ENCODE measurements at regions of chr14 and their contacts with region 1.

Region 1: GRCh38 chr14:23320774-23321571 is at the start of gene PABPN1:
- DNase-seq: peak; percentile 99 to 100 (median 99)
- H3K4me3 ChIP-seq: peak within 1 kb of the TSS; percentile 81
- H3K27ac ChIP-seq: peak within 1 kb of the TSS; percentile 74 to 98
- H3K4me1 ChIP-seq: peaks cover 10% of the 10 kb centered on the region
- H3K27me3 ChIP-seq: no peaks in the 10 kb centered on the region
- CTCF ChIP-seq: no peak
- EP300 ChIP-seq: peak; percentile 74
- POLR2A ChIP-seq: peak; percentile 70
- total RNA-seq, gene PABPN1: 37.2 to 164 (median 136) TPM

Region 2: DNA sequence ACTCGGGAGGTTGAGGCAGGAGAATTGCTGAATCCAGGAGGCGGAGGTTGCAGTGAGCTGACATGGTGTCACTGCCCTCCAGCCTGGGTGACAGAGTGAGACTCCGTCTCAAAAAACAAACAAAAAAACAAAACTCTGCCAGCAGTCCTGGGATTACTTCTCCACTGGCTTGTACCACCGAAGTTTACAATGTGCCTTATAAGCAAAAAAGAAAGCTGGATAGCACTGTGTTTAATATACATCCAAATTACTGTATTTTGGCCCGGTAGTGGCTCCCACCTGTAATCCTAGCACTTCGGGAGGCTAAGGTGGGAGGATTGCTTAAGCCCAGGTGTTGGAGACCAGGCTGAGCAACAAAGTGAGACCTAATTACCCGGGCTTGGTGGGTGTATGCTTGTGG is 51.8 kb before region 1 on chr14:
- intact Hi-C with region 1: no loop called
- DNase-seq: no peak
- H3K4me3 ChIP-seq: no peak overlapping the region
- H3K27ac ChIP-seq: no peak overlapping the region
- H3K4me1 ChIP-seq: no peaks in the 10 kb centered on the region
- H3K27me3 ChIP-seq: no peaks in the 10 kb centered on the region
- CTCF ChIP-seq: no peak
- EP300 ChIP-seq: no peak
- POLR2A ChIP-seq: no peak

Region 3: GRCh38 chr14:23301288-23301968 is 19.5 kb before region 1 on chr14:
- intact Hi-C with region 1: loop called in 2 of 4 experiments (anchors 2 kb)
- DNase-seq: peak; percentile 98 to 99 (median 98)
- H3K4me3 ChIP-seq: peak overlapping the region; percentile 63
- H3K27ac ChIP-seq: peak overlapping the region; percentile 92 to 94
- H3K4me1 ChIP-seq: no peaks in the 10 kb centered on the region
- H3K27me3 ChIP-seq: no peaks in the 10 kb centered on the region
- CTCF ChIP-seq: peak; percentile 51 to 99 (median 99)
- EP300 ChIP-seq: peak; percentile 41
- POLR2A ChIP-seq: peak; percentile 67

Region 4: GRCh38 chr14:23362200-23362599 is 41.2 kb after region 1 on chr14:
- intact Hi-C with region 1: loop called in 1 of 4 experiments (anchors 1 kb)
- DNase-seq: no peak
- H3K4me3 ChIP-seq: no peak overlapping the region
- H3K27ac ChIP-seq: no peak overlapping the region
- H3K4me1 ChIP-seq: no peaks in the 10 kb centered on the region
- H3K27me3 ChIP-seq: no peaks in the 10 kb centered on the region
- CTCF ChIP-seq: no peak
- EP300 ChIP-seq: no peak
- POLR2A ChIP-seq: no peak

Region 5: GRCh38 chr14:23430788-23431085 is 109.8 kb after region 1 on chr14:
- intact Hi-C with region 1: no loop called
- DNase-seq: no peak
- H3K4me3 ChIP-seq: no peak overlapping the region
- H3K27ac ChIP-seq: no peak overlapping the region
- H3K4me1 ChIP-seq: no peaks in the 10 kb centered on the region
- H3K27me3 ChIP-seq: no peaks in the 10 kb centered on the region
- CTCF ChIP-seq: no peak
- EP300 ChIP-seq: no peak
- POLR2A ChIP-seq: no peak

Region 6: DNA sequence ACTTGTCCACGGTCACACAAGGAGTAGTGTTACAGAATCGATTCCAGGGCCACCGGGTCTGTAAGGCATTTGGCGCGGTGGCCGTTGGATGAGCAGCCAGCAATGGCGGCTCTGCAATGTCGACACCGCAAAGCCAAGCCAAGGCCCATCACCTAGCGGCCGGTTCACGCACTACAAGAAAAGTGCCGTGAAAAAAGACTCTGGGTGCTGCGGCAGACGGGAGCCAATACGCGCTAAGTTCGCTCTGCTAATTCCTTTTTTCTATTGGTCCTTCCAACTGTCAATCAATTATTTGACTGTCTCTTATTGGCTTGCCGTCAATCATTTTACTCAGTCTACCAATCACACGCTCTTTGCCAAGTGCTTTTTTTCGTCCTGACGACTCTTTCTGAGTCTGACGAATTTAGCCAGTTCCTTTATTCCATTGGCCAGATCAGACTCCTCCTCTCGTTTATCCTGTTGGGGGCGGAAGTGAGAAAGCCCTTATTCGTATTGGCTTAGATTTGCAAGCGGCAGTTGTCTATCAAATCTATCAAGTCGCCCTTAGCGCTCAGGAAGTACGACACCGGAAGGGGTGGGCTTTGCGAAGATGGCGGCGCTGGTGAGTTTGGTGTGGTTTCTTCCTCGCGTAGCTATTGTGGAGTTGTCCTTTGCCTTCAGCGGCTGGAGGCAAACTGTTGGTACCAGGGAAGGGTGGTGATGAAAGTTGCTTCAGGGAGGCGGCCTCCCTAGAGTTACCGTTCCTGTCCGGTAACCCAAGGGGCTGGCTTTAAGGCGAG is 148.3 kb after region 1 on chr14 and contains the start of gene NGDN:
- intact Hi-C with region 1: loop called (anchors 10 kb)
- DNase-seq: peak; percentile 91 to 96 (median 96)
- H3K4me3 ChIP-seq: peak within 1 kb of the TSS; percentile 51
- H3K27ac ChIP-seq: peak within 1 kb of the TSS; percentile 71 to 78
- H3K4me1 ChIP-seq: no peaks in the 10 kb centered on the region
- H3K27me3 ChIP-seq: no peaks in the 10 kb centered on the region
- CTCF ChIP-seq: peak; percentile 92 to 95 (median 92)
- EP300 ChIP-seq: no peak
- POLR2A ChIP-seq: peak; percentile 53
- total RNA-seq, gene NGDN: 32.9 to 51.6 (median 38.4) TPM

Region 7: GRCh38 chr14:23478111-23478759 is 157.3 kb after region 1 on chr14:
- intact Hi-C with region 1: loop called in 1 of 4 experiments (anchors 10 kb)
- DNase-seq: peak; percentile 41 to 65 (median 62)
- H3K4me3 ChIP-seq: no peak overlapping the region
- H3K27ac ChIP-seq: no peak overlapping the region
- H3K4me1 ChIP-seq: no peaks in the 10 kb centered on the region
- H3K27me3 ChIP-seq: no peaks in the 10 kb centered on the region
- CTCF ChIP-seq: peak; percentile 40 to 87 (median 64)
- EP300 ChIP-seq: no peak
- POLR2A ChIP-seq: no peak

Region 8: DNA sequence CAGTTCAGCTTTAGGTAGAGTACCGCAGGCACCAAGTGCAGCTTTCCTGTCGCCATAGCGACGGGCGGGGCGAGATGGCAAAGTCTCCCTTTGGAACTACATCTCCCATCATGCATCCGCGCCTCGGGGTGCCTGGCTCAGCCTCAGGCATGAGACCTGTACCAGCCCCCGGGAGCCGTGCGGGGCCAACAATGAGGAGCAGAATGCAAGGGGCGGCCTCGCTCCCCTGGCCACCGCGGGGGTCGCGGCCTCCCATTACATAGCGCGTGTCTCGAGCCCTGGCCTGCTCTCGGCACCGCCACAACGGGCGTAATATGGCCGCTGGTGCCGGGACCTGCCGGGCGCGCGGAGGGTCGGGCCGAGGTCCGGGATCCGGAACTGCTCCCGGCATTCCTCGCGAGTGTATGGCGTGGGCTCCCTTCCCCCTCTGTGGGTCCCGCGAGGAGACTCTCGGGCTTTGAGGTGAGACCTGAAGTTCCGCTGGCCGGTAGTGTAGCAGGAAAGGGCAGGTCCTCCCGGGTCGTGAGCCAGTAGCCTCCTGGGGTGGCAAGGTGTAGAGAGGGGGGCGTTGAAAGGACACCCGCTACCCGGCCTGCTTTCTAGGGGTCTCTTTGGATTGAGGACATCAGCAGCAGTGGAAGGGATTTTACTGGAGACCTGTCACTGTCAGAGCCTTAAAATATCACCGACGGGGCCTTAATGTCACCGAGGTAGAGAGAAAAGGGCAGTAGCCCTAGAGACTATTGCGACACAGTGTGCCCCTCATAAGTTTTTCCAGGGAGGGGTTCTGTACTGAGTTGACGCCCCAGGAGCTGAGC is 235.1 kb after region 1 on chr14 and contains the start of gene THTPA:
- intact Hi-C with region 1: loop called in 2 of 4 experiments (anchors 10 kb)
- DNase-seq: peak; percentile 88 to 94 (median 91)
- H3K4me3 ChIP-seq: peak within 1 kb of the TSS; percentile 72
- H3K27ac ChIP-seq: peak within 1 kb of the TSS; percentile 82 to 89
- H3K4me1 ChIP-seq: peaks cover 6% of the 10 kb centered on the region
- H3K27me3 ChIP-seq: no peaks in the 10 kb centered on the region
- CTCF ChIP-seq: no peak
- EP300 ChIP-seq: no peak
- POLR2A ChIP-seq: no peak
- total RNA-seq, gene THTPA: 14.6 to 22.3 (median 19.6) TPM

Region 9: GRCh38 chr14:23567192-23568020 is 246.4 kb after region 1 on chr14 and contains the start of gene AP1G2:
- intact Hi-C with region 1: loop called in 1 of 4 experiments (anchors 10 kb)
- DNase-seq: peak; percentile 92 to 95 (median 92)
- H3K4me3 ChIP-seq: peak within 1 kb of the TSS; percentile 73
- H3K27ac ChIP-seq: peak within 1 kb of the TSS; percentile 75 to 81
- H3K4me1 ChIP-seq: no peaks in the 10 kb centered on the region
- H3K27me3 ChIP-seq: no peaks in the 10 kb centered on the region
- CTCF ChIP-seq: no peak
- EP300 ChIP-seq: no peak
- POLR2A ChIP-seq: peak; percentile 63
- total RNA-seq, gene AP1G2: 76.3 to 129 (median 92.8) TPM